Activated B cell treated with CpG ODN at 0.5 μM for 24 hours (primary cell): ENCODE measurements at regions of chr17 and their contacts with region 1.

Region 1: DNA sequence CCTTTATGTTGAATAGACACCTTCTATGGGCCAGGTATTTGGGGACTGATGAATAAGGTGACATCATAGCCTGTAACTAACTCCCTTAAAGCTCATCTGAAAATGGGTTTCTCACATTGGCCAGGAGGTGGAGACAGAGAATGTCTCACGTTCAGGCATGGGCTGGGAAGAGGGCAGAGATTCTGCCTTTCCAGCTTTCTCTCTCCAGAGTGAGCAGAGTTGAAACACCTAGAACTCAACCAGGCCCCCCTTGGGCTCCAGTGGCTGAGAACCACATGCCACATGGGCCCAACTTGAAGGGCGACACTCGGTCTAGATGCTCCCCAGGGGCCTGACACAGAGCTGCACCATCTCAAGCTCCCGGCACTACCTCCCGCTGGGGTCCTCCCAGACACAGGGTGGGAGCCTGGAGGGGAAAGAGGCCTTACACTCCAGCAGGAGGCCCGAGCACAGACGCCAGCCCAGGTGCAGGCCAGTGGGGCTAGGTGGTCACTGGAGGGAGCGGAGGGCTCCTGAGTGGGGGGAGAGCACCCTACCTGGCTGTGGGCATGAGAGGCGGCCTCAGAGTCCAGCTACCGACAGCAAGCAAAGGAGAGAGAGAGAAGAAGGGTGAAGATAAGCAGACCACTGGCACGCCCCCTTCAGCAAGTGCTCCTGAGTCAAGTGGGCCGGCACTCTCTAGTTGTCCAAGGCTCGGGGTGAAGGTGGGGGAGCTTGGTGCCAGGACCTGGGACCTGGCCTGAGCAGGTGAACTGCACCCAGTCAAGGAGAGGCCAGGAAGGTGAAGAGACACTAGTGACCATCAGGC is 55.9 kb downstream of the MYO18A start:
- DNase-seq: no peak
- ATAC-seq: peak; percentile 90
- H3K4me3 Mint-ChIP-seq: no peak overlapping the region
- H3K27ac Mint-ChIP-seq: no peak overlapping the region
- H3K4me1 Mint-ChIP-seq: no peaks in the 10 kb centered on the region
- H3K27me3 Mint-ChIP-seq: no peaks in the 10 kb centered on the region
- CTCF ChIP-seq: no peak

Region 2: GRCh38 chr17:28967221-28968140 is 156.8 kb before region 1 on chr17:
- CTCF ChIA-PET with region 1: interaction called, 149 read pairs
- POLR2A ChIA-PET with region 1: no interaction called
- intact Hi-C with region 1: no loop called
- DNase-seq: no peak
- ATAC-seq: no peak
- H3K4me3 Mint-ChIP-seq: no peak overlapping the region
- H3K27ac Mint-ChIP-seq: peak overlapping the region; percentile 68
- H3K4me1 Mint-ChIP-seq: peaks cover 8% of the 10 kb centered on the region
- H3K27me3 Mint-ChIP-seq: peaks cover 16% of the 10 kb centered on the region
- CTCF ChIP-seq: no peak

Region 3: DNA sequence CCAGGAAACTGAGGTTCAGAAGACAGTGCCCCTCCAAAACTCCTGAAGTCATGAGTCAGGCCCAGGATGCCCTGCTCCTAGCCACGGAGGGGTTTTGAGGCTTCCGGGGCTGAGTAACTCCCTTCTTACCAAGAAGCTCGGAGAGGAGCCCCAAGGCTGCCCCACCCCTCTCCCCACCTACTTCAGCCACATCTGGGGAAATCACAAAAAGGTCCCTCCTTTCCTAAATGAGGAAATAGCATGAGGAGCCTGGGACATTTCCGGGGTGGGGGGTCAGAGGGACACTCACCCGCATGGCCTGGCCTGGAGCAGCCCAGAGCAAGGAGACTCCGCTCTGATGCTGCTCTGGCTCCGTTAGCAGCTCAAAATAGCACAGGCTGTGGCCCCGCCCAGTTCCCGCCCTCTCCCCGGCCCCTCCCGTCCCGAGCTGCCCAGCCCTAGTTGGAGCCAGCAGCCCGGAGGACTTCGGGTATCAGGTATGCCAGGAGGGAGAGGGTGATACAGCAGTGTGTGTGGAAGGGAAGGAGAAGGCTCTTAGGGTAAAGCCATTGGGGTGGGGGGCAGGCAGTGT is 15.8 kb after region 1 on chr17:
- CTCF ChIA-PET with region 1: interaction called, 61 read pairs
- POLR2A ChIA-PET with region 1: interaction called, 11 read pairs
- intact Hi-C with region 1: loop called (anchors 1 kb)
- DNase-seq: peak; percentile 51
- ATAC-seq: peak; percentile 62
- H3K4me3 Mint-ChIP-seq: peak overlapping the region; percentile 88
- H3K27ac Mint-ChIP-seq: peak overlapping the region; percentile 97
- H3K4me1 Mint-ChIP-seq: peaks cover 72% of the 10 kb centered on the region
- H3K27me3 Mint-ChIP-seq: no peaks in the 10 kb centered on the region
- CTCF ChIP-seq: no peak

Region 4: DNA sequence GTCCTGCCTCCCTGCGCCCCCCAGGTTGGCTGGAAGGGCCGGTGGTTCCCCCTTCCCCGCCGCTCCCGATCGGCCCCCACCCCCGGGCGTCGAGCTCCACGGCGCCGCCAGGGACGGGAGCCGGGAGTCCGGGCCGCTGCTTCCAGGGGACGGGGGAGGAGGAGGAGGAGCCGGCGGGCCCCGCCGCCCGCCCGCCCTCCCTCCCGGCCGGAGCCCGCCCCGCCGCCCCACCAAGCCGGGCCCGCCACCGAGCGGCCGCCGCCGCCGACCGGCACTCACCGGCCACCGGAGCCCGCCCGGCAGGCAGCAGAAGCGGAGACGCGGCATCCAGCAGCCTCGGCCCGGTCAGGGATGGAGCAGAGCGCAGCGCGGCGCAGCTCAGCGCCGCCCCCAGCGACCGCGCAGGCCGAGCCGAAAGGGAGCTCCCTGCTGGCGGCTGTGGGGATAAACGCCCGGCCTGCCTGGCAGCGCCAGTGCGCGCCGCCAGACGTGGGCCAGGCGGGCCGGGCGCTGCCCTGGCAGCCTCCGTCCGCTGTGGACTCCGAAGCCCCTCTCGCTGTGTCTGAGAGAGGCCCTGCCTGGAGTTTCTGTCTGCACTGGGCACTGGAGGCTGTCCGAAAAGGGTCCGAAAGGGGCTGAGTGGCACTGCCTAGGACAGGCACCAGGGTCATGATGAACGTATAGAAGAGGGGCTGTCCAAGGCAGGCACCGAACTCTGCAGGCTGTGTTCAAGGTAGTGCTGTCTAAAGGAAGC is 55.9 kb after region 1 on chr17 and contains the start of gene MYO18A:
- CTCF ChIA-PET with region 1: interaction called, 42 read pairs
- POLR2A ChIA-PET with region 1: interaction called, 10 read pairs
- intact Hi-C with region 1: loop called (anchors 1 kb)
- DNase-seq: peak; percentile 80
- ATAC-seq: peak; percentile 98
- H3K4me3 Mint-ChIP-seq: peak within 1 kb of the TSS; percentile 57
- H3K27ac Mint-ChIP-seq: no peak within 1 kb of the TSS
- H3K4me1 Mint-ChIP-seq: peaks cover 13% of the 10 kb centered on the region
- H3K27me3 Mint-ChIP-seq: peaks cover 9% of the 10 kb centered on the region
- CTCF ChIP-seq: no peak
- total RNA-seq, gene MYO18A: 67.8 and 79.8 TPM in 2 replicates

Region 5: DNA sequence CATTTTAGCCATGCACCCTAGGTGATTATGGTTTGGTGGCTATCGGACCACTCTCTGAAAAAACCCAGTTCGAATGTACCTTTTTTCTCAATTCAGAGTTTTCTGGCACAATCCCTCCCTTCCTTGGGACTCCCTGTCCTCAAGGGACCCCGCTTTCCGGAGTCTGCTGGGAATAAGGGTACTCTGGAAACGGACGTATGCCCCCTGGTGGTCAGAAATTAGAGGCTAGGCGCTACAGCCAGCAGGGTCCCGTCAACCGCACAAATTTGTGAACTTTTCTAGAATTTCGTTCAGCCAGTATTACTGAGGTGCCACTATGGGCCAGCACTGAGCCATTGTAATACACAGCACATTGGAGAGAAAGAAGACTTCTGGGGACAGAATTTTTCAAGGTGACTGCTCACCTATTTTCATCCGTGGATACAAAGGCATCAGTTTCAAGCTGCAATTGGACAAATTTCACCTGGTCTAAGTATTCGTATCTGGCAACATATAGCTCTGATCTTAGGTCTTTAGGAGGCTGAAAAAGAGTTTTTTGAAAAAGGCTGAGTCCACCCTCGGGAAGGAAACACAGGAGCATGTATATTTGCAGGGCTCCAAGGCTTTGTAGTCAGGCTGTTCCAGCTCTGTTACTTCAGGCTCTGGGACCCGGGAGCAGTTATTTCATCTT is 95.2 kb after region 1 on chr17:
- CTCF ChIA-PET with region 1: interaction called, 44 read pairs
- POLR2A ChIA-PET with region 1: no interaction called
- intact Hi-C with region 1: loop called (anchors 1 kb)
- DNase-seq: peak; percentile 52
- ATAC-seq: peak; percentile 88
- H3K4me3 Mint-ChIP-seq: no peak overlapping the region
- H3K27ac Mint-ChIP-seq: no peak overlapping the region
- H3K4me1 Mint-ChIP-seq: peaks cover 8% of the 10 kb centered on the region
- H3K27me3 Mint-ChIP-seq: peaks cover 2% of the 10 kb centered on the region
- CTCF ChIP-seq: peak; percentile 20